ENCODE measurements at regions of chr1 and their contacts with region 1.

Region 1: DNA sequence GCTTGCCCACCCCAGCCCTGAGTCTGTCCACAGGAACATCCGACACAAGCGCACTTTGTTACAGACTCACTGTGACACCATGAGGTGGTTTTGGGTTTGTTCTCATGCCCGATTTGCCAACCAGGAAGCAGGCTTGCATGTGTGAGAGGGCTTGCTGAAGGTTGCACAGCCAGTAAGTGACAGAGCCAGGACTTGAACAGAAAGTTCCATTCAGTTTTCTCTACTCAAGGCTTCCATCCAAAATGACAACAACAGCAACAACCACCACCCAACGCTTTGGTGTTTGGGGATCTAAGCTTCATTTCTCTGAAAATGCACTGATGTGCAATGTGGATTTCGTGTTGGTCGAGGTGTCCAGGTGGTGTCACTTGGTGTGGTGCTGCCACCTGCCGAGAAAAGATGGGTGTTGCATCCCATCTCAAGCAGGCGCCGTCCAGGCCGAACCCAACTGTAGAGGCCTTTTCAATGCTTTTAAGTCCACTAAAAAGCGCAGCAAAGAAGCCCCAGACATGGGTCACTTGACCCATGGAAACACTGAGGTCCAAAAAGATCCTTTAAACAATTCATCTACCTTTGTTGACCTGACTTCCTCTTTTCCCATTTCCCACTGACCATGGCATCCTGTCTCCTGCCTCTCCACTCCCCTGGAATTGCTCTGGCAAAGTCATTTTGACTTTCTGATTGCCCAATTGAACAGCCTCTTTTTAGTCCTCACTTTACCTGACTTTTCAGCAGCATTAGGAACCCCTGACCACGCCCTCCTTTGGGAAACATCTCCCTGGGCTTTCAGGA is 12.2 kb downstream of the CITED4 start:
- DNase-seq: peak; percentile 55 to 90 (median 77)

Region 2: DNA sequence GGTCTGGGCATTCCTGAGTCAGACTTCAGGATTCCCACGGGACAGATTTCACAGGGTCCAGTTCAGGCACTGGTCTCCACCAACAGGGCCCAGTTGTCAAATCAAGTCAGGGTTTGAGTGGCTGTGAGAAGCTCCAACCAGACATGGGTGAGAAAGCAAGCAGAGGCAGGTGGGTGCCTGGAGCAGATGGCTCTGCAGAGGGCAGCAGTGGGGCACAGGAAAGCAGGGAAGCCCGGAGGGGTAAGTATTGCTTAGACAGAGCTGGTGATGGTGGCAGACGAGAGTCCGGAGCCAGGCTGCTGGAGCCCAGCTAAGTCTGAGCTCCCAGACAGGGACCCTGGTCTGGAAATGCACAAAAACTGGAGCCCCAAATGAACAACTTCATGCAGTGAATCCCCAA is 224.9 kb before region 1 on chr1:
- intact Hi-C with region 1: loop called (anchors 10 kb)
- DNase-seq: peak in 40 of 42 donors; percentile 13 to 80 (median 54)

Region 3: DNA sequence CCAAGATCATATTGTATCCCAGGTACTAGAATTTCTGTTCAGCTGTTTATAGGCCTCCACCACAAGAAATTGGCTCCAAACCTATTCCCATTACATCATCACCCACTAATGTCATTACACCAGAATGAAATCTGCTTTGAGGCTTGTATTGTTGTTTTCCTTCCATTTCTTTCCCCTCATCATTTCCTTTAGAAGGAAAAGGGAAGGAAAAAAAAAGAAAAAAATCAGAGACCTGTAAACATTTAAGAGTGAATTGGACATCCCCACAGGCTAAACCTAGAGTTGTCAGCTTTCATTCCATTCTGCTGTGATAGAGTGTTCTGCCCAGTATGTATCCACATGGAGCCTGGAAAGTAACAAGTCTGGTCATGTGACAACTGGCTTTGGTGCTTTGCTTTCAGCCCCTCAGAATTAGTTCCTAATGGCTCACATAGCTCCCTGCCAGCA is 113.9 kb before region 1 on chr1:
- intact Hi-C with region 1: no loop called
- DNase-seq: peak in 8 of 42 donors; percentile 5 to 62 (median 18)

Region 4: DNA sequence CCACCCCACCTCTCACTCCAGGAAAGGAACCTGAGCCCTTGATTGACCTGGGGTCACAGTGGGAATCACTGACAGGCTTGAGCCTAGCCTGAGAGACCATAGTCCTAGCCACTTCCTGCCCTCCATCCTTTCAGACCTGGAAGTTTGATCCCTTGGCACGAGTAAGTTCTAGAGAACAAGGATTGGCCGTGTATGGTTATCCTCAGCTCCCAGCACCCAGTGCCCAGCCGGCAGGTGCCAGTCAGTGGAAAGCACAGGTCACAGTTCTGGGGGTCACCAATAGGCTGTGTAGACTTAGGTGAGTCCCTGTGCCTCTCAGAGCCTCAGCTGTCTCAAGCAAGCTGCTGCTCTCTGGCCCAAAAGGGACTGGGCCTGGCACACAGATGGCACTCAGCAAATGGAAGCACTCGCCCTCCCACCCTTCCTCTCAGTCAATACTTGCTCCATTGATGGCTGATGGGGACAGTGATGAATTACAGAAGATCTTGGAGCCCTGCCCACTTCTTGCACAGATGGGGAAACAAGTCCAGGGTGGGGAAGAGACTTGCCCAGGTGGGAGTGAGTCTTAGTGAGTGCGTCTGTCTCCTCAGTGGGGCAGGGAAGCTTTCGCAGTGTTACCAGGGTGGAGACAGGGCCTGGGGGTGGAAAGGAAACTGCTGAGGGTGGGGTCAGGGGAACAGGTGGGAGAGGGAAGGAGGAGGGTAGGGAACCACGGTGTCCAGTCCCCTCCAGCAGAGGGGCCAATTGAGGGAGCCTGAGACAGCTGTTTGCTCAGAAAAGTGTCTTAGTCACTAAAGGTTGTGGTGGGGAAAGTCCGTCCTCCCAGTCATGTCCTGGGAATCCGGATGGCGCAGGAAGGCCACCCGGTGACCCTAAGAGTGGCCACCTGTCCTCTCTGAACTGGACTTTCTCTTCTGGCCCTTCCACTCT is 69.1 kb before region 1 on chr1:
- intact Hi-C with region 1: loop called (anchors 2 kb)
- DNase-seq: no peak

Region 5: GRCh38 chr1:40951943-40952743 is 102.1 kb after region 1 on chr1:
- intact Hi-C with region 1: loop called (anchors 5 kb)
- DNase-seq: peak; percentile 65 to 92 (median 80)

Region 6: DNA sequence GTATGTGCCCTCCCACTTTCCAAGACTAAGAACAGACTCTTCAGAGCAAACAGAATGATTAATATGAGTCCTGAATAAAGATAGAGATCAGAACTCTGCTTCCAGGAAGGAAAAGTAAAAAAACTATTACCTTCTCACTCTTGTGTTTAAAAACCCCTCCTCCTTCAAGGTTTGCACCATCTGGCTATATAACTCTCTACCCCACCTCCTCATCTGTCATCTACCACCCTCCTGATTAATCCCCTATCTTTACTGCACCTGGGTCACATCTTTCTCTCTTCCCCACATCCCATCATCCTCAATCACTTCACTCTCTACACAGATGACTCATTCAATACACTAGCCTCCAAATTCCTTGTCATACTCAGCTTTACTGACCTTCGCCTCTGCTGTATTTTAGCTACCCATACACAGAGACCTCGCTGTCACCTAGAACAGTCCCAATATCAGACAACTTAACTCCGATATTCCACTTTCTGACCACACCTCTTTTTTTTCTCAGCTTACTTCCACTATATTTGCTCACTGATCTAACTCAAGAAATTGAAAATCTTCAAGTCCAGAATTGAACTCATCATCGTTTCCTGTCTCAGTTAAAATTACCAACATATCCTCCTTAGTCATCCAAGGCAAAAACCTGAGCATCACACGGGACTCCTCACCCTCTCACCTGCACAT is 388.5 kb after region 1 on chr1:
- intact Hi-C with region 1: no loop called
- DNase-seq: no peak

Measured in head of caudate nucleus (tissue), 42 donors.